ENCODE measurements at regions of chr1 and their contacts with region 1.

Region 1: GRCh38 chr1:83931658-83932253 is 67.2 kb downstream of the TTLL7 start:
- DNase-seq: peak in 2 of 5 donors; percentile 64 to 79
- H3K4me3 ChIP-seq: no peak overlapping the region
- H3K27ac ChIP-seq: no peak overlapping the region
- H3K4me1 ChIP-seq: no peaks in the 10 kb centered on the region
- H3K27me3 ChIP-seq: no peaks in the 10 kb centered on the region
- CTCF ChIP-seq: peak; percentile 66

Region 2: GRCh38 chr1:83718338-83718737 is 213.4 kb before region 1 on chr1:
- intact Hi-C with region 1: no loop called
- DNase-seq: no peak
- H3K4me3 ChIP-seq: no peak overlapping the region
- H3K27ac ChIP-seq: no peak overlapping the region
- H3K4me1 ChIP-seq: no peaks in the 10 kb centered on the region
- H3K27me3 ChIP-seq: no peaks in the 10 kb centered on the region
- CTCF ChIP-seq: no peak

Region 3: GRCh38 chr1:84117868-84118267 is 186.1 kb after region 1 on chr1:
- intact Hi-C with region 1: loop called (anchors 5 kb)
- DNase-seq: no peak
- H3K4me3 ChIP-seq: no peak overlapping the region
- H3K27ac ChIP-seq: no peak overlapping the region
- H3K4me1 ChIP-seq: no peaks in the 10 kb centered on the region
- H3K27me3 ChIP-seq: no peaks in the 10 kb centered on the region
- CTCF ChIP-seq: no peak

Region 4: GRCh38 chr1:84344286-84344685 is 412.5 kb after region 1 on chr1:
- intact Hi-C with region 1: no loop called
- DNase-seq: no peak
- H3K4me3 ChIP-seq: no peak overlapping the region
- H3K27ac ChIP-seq: no peak overlapping the region
- H3K4me1 ChIP-seq: no peaks in the 10 kb centered on the region
- H3K27me3 ChIP-seq: no peaks in the 10 kb centered on the region
- CTCF ChIP-seq: no peak

Measured in kidney (tissue), 22 donors.